MCF 10A (cell line): ENCODE measurements at regions of chr14 and their contacts with region 1.

Region 1: GRCh38 chr14:58107947-58108552 is 44.0 kb downstream of the ARMH4 start:
- DNase-seq: peak; percentile 56
- H3K4me3 Mint-ChIP-seq: no peak overlapping the region
- H3K27ac Mint-ChIP-seq: no peak overlapping the region
- H3K4me1 Mint-ChIP-seq: peaks cover 7% of the 10 kb centered on the region
- H3K27me3 Mint-ChIP-seq: peaks cover 92% of the 10 kb centered on the region
- CTCF ChIP-seq: peak; percentile 81

Region 2: GRCh38 chr14:57811998-57812546 is 296.0 kb before region 1 on chr14:
- CTCF ChIA-PET with region 1: no interaction called
- POLR2A ChIA-PET with region 1: no interaction called
- intact Hi-C with region 1: no loop called
- DNase-seq: no peak
- H3K4me3 Mint-ChIP-seq: no peak overlapping the region
- H3K27ac Mint-ChIP-seq: no peak overlapping the region
- H3K4me1 Mint-ChIP-seq: peaks cover 8% of the 10 kb centered on the region
- H3K27me3 Mint-ChIP-seq: no peaks in the 10 kb centered on the region
- CTCF ChIP-seq: no peak

Region 3: GRCh38 chr14:57870686-57871457 is 237.2 kb before region 1 on chr14:
- CTCF ChIA-PET with region 1: no interaction called
- POLR2A ChIA-PET with region 1: no interaction called
- intact Hi-C with region 1: no loop called
- DNase-seq: no peak
- H3K4me3 Mint-ChIP-seq: no peak overlapping the region
- H3K27ac Mint-ChIP-seq: no peak overlapping the region
- H3K4me1 Mint-ChIP-seq: peaks cover 6% of the 10 kb centered on the region
- H3K27me3 Mint-ChIP-seq: no peaks in the 10 kb centered on the region
- CTCF ChIP-seq: no peak

Region 4: GRCh38 chr14:58171090-58171489 is 63.0 kb after region 1 on chr14:
- CTCF ChIA-PET with region 1: interaction called, 108 read pairs
- POLR2A ChIA-PET with region 1: interaction called, 4 read pairs
- intact Hi-C with region 1: loop called (anchors 1 kb)
- DNase-seq: peak; percentile 89
- H3K4me3 Mint-ChIP-seq: peak overlapping the region; percentile 40
- H3K27ac Mint-ChIP-seq: peak overlapping the region; percentile 39
- H3K4me1 Mint-ChIP-seq: peaks cover 14% of the 10 kb centered on the region
- H3K27me3 Mint-ChIP-seq: peaks cover 33% of the 10 kb centered on the region
- CTCF ChIP-seq: no peak

Region 5: GRCh38 chr14:58199726-58200479 is 91.9 kb after region 1 on chr14 and contains the start of gene ACTR10:
- CTCF ChIA-PET with region 1: interaction called, 11 read pairs
- POLR2A ChIA-PET with region 1: interaction called, 6 read pairs
- intact Hi-C with region 1: loop called (anchors 1 kb)
- DNase-seq: peak; percentile 88
- H3K4me3 Mint-ChIP-seq: peak within 1 kb of the TSS; percentile 98
- H3K27ac Mint-ChIP-seq: peak within 1 kb of the TSS; percentile 85
- H3K4me1 Mint-ChIP-seq: peaks cover 16% of the 10 kb centered on the region
- H3K27me3 Mint-ChIP-seq: peaks cover 20% of the 10 kb centered on the region
- CTCF ChIP-seq: no peak
- total RNA-seq, gene ACTR10: 55.1 and 78.8 TPM in 2 replicates

Region 6: GRCh38 chr14:58244556-58245387 is 136.7 kb after region 1 on chr14 and contains the start of gene PSMA3:
- CTCF ChIA-PET with region 1: interaction called, 5 read pairs
- POLR2A ChIA-PET with region 1: no interaction called
- intact Hi-C with region 1: loop called (anchors 1 kb)
- DNase-seq: peak; percentile 98
- H3K4me3 Mint-ChIP-seq: peak within 1 kb of the TSS; percentile 96
- H3K27ac Mint-ChIP-seq: peak within 1 kb of the TSS; percentile 99
- H3K4me1 Mint-ChIP-seq: peaks cover 20% of the 10 kb centered on the region
- H3K27me3 Mint-ChIP-seq: no peaks in the 10 kb centered on the region
- CTCF ChIP-seq: no peak
- total RNA-seq, gene PSMA3: 203 and 239 TPM in 2 replicates

Region 7: GRCh38 chr14:58327019-58327418 is 219.0 kb after region 1 on chr14:
- CTCF ChIA-PET with region 1: no interaction called
- POLR2A ChIA-PET with region 1: no interaction called
- intact Hi-C with region 1: no loop called
- DNase-seq: no peak
- H3K4me3 Mint-ChIP-seq: no peak overlapping the region
- H3K27ac Mint-ChIP-seq: no peak overlapping the region
- H3K4me1 Mint-ChIP-seq: peaks cover 10% of the 10 kb centered on the region
- H3K27me3 Mint-ChIP-seq: no peaks in the 10 kb centered on the region
- CTCF ChIP-seq: no peak

Region 8: GRCh38 chr14:58362798-58363412 is 254.9 kb after region 1 on chr14:
- CTCF ChIA-PET with region 1: interaction called, 3 read pairs
- POLR2A ChIA-PET with region 1: no interaction called
- intact Hi-C with region 1: loop called (anchors 1 kb)
- DNase-seq: peak; percentile 49
- H3K4me3 Mint-ChIP-seq: no peak overlapping the region
- H3K27ac Mint-ChIP-seq: no peak overlapping the region
- H3K4me1 Mint-ChIP-seq: no peaks in the 10 kb centered on the region
- H3K27me3 Mint-ChIP-seq: no peaks in the 10 kb centered on the region
- CTCF ChIP-seq: peak; percentile 20

Region 9: GRCh38 chr14:58401585-58401984 is 293.5 kb after region 1 on chr14:
- CTCF ChIA-PET with region 1: no interaction called
- POLR2A ChIA-PET with region 1: interaction called, 3 read pairs
- intact Hi-C with region 1: loop called (anchors 5 kb)
- DNase-seq: peak; percentile 9
- H3K4me3 Mint-ChIP-seq: no peak overlapping the region
- H3K27ac Mint-ChIP-seq: no peak overlapping the region
- H3K4me1 Mint-ChIP-seq: no peaks in the 10 kb centered on the region
- H3K27me3 Mint-ChIP-seq: no peaks in the 10 kb centered on the region
- CTCF ChIP-seq: no peak

Region 10: DNA sequence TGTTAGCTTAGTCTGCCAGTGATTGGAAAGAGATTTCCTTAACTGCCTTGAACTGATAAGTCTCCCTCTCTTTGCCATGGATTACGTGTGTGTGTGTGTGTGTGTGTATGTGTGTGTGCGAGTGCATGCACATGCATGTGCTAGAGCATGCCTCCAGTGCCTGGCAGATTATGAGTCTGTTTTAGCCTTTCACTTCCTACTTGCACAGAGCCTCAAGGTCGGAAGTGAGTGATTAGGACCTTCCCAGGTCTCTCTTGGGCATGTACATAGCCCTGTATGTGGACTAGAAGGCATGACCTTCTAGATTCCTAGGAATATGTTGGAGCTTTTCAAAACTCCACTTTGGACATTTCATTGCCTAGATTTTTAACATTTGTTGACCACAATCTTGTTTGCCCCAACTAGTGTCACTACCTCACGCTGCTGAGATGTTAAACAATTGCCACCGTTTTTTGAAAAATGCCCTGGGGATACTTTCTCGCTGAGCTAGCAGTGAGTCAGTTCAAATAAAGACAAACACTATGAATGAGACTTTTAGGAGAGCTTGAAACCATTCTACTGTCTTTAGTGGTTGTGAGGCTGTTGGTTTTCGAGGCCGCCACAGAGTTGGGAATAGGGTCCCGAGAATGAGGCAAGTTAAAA is 347.7 kb after region 1 on chr14:
- CTCF ChIA-PET with region 1: no interaction called
- POLR2A ChIA-PET with region 1: no interaction called
- intact Hi-C with region 1: loop called (anchors 5 kb)
- DNase-seq: peak; percentile 80
- H3K4me3 Mint-ChIP-seq: peak overlapping the region; percentile 47
- H3K27ac Mint-ChIP-seq: peak overlapping the region; percentile 87
- H3K4me1 Mint-ChIP-seq: peaks cover 13% of the 10 kb centered on the region
- H3K27me3 Mint-ChIP-seq: no peaks in the 10 kb centered on the region
- CTCF ChIP-seq: no peak